ENCODE measurements at regions of chr10 and their contacts with region 1.

Region 1: DNA sequence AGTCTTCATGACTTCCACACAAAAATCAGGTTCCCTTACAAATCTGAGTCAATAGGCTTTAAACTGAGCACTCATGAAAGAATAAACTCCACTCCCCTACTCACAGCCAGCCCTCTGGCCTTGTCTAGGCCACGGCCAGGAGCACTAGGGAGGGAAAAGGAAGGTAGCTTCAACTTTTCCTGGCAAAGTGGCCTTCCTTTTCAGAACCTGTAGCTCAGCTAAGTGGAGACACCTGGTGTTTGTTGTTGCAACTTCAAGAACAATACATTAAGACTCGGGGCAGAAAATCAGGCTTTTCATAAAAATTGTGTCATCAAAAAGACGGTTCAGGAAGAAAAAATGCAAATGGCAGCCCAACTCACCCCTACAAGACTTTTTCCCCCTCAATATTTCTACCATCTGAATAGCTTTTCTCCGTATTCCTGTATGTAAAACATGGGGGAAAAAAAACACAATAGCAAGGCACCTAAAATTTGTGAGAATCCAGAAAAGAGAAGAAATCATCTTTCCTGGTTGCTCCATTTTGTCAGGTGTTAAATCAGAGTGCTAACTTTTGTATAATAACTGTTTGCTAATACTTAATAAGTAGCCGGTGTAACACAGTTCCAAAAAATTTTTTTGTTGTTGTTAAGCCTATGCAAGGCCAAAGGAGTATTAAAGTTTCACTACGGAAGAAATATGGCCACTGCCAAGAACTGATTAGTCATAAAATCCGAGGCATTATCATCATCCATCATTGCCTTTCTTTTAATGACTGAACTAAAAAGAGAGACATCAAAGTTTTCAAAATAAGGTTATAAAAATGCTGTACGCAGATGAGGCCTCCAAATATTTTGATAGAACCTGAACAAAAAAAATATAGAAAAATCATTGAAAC is 66.2 kb upstream of the ARID5B start:
- DNase-seq: no peak
- ATAC-seq: peak; percentile 68
- H3K4me3 ChIP-seq: no peak overlapping the region
- H3K27ac ChIP-seq: peak overlapping the region; percentile 1 to 30
- H3K4me1 ChIP-seq: peaks cover 2 to 5% of the 10 kb centered on the region in 2 donors
- H3K27me3 ChIP-seq: no peaks in the 10 kb centered on the region

Region 2: GRCh38 chr10:61793760-61794703 is 41.3 kb before region 1 on chr10:
- intact Hi-C with region 1: loop called (anchors 5 kb)
- DNase-seq: no peak
- ATAC-seq: no peak
- H3K4me3 ChIP-seq: no peak overlapping the region
- H3K27ac ChIP-seq: no peak overlapping the region
- H3K4me1 ChIP-seq: peaks cover 0 to 4% of the 10 kb centered on the region in 2 donors
- H3K27me3 ChIP-seq: no peaks in the 10 kb centered on the region

Region 3: GRCh38 chr10:61896854-61897661 is 61.8 kb after region 1 on chr10:
- intact Hi-C with region 1: loop called (anchors 5 kb)
- DNase-seq: peak; percentile 76 to 81
- ATAC-seq: peak; percentile 84
- H3K4me3 ChIP-seq: peak overlapping the region in 1 of 2 donors; percentile 6
- H3K27ac ChIP-seq: peak overlapping the region in 1 of 2 donors; percentile 4
- H3K4me1 ChIP-seq: peaks cover 0 to 1% of the 10 kb centered on the region in 2 donors
- H3K27me3 ChIP-seq: no peaks in the 10 kb centered on the region

Region 4: DNA sequence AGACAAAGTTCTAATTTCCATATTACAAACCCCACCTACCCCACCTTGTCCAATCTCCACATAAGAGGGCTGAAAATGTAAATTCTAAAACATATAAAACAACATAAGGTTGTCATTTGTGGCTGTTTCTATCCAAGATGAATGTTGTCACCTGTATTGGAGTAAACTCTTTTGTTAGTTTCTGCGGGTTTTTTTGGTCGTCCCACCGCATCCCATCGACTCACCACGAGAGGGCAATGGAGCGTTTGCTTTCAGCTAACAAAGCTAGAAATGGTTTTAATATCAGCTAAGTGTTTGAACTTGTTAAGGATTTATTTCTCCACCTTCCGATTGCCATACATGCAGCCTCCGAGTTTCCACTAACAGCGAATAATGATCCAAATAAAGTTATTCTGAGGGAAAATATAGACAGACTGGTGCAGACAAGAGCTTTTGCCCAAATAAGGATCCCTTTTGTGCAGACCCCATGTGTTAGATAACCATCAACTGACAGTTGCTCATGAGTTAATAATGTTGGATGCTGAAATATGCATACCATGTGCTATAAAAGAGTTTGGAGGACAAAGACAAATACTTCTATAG is 203.4 kb after region 1 on chr10:
- intact Hi-C with region 1: loop called in 1 of 2 experiments (anchors 5 kb)
- DNase-seq: peak; percentile 74 to 84
- ATAC-seq: peak; percentile 76
- H3K4me3 ChIP-seq: peak overlapping the region in 1 of 2 donors; percentile 26
- H3K27ac ChIP-seq: peak overlapping the region; percentile 44 to 64
- H3K4me1 ChIP-seq: peaks cover 5 to 8% of the 10 kb centered on the region in 2 donors
- H3K27me3 ChIP-seq: no peaks in the 10 kb centered on the region